ENCODE measurements at regions of chr19 and their contacts with region 1.

Region 1: DNA sequence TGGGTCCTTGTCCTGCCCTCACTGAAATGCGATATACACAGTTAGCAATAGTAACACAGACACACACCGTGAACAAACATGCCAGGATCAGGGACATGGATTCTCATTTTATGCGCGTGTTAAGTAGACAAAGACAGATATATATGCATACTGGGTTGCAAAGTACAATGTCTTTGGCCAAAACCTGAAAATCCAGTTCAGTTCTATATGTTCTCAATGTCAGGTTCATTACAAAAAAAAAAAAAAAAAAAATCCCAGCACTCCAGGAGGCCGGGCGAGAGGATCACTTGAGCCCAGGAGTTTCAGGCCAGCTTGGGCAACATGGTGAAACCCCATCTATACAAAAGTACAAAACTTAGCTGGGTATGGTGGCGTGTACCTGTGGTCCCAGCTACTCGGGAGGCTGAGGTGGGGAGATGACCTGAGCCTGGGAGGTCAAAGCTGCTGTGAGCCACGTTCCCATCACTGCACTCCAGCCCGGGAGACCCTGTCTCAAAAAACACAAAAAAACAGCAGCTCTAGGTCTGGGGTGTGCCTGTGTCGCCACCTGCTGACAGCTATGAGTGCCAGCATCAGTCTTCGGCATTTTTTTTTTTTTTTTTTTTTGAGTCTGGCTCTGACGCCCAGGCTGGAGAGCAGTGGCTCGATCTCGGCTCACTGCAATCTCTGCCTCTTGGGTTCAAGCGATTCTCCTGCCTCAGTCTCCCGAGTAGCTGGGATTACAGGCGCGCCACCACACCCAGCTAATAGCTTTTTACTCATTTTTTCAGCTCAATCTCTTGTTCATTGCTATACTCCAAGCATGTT is 10.3 kb downstream of the AP2S1 start:
- DNase-seq: no peak
- ATAC-seq: peak; percentile 85
- H3K4me3 ChIP-seq: no peak overlapping the region
- H3K27ac ChIP-seq: no peak overlapping the region
- H3K4me1 ChIP-seq: no peaks in the 10 kb centered on the region
- H3K27me3 ChIP-seq: no peaks in the 10 kb centered on the region

Region 2: DNA sequence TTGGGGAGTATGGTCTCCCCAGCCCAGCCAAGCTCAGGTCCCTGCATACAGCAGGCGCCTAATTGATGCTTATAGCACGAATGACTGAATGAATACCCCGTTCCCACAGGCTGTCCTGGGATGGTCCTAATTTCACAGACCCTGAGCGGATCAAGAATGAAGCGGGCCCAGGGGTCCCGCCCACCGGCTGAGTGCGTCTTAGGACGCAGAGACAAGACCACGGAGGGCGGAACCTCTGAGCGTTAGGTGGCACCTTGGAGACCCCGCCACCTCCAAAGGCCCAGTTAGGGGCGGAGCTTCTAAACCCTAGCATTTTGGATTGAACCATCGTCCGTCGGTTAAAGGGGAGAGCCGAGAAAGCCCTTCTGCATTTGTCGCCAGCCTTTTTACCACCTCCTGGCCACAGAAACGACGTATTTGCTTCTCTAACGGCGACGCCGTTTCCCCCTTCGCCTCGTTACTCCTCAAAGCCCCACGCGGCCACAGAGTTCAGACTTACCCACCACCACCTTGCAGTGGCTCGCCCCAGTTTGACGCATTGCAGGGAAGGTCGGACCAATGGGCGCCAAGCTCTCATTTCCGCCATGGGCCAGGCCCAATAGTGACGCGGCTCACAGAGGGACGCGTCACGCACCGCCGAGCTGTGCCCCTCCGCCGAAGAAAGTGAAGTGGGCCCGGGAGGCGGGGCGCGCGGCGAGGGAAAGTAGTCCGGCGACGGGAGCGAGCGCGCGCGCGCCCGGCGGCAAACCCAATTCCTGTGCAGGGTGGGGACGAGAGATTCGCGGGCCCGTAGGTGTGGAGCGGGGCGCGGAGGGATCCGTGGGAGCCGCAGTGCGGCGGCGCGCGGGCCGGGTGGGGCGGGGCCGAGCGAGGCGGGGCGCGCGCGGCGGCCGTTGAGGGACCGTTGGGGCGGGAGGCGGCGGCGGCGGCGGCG is 239.7 kb before region 1 on chr19:
- intact Hi-C with region 1: loop called in 1 of 2 experiments (anchors 10 kb)
- DNase-seq: peak; percentile 98 to 99
- ATAC-seq: peak; percentile 94
- H3K4me3 ChIP-seq: peak overlapping the region; percentile 44 to 89
- H3K27ac ChIP-seq: peak overlapping the region; percentile 8 to 91
- H3K4me1 ChIP-seq: peaks cover 0 to 2% of the 10 kb centered on the region in 2 donors
- H3K27me3 ChIP-seq: no peaks in the 10 kb centered on the region

Region 3: GRCh38 chr19:46753420-46754155 is 86.8 kb before region 1 on chr19:
- intact Hi-C with region 1: loop called (anchors 1 kb)
- DNase-seq: peak in 1 of 2 donors; percentile 69
- ATAC-seq: no peak
- H3K4me3 ChIP-seq: no peak overlapping the region
- H3K27ac ChIP-seq: no peak overlapping the region
- H3K4me1 ChIP-seq: no peaks in the 10 kb centered on the region
- H3K27me3 ChIP-seq: no peaks in the 10 kb centered on the region

Region 4: DNA sequence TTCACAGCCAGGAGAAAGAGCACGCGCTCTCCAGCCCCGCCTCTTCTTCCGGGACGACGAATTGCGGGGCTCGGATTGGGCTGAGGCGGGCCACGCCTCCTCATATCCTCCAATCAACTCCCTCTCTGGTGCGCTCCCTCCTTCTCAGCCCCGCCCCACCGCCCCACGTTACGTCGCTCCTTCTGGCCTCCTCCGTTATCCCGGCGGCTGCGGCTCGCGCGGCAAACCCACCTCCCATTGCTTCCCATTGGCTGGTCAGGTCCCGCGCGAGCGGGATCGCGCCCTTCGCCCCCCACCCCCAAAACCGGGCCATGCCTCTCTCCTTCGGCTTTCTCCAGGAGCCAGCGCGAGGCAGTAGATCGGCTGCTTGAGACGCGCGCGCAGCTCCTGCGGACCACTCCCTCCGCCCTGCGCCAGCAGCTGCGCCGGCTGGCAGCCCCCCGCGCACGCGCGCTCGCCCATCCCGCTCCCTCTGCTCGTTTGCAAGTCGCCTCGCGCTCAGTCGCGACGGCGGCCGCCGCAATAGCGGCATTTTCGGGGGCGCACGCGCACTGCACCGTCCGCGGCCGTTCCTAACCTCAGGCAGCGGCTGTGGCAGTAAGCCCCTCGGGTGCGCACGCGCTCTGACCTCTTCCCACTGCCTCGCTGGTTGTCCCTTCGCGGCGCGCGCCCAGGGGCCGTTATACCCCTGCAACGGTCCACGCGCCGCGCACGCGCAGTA is 19.9 kb after region 1 on chr19:
- intact Hi-C with region 1: no loop called
- DNase-seq: peak; percentile 99
- ATAC-seq: peak; percentile 94
- H3K4me3 ChIP-seq: peak overlapping the region; percentile 95 to 97
- H3K27ac ChIP-seq: peak overlapping the region; percentile 62 to 80
- H3K4me1 ChIP-seq: peaks cover 5 to 6% of the 10 kb centered on the region in 2 donors
- H3K27me3 ChIP-seq: no peaks in the 10 kb centered on the region